Transverse colon (tissue), 4 donors: ENCODE measurements at regions of chr1 and their contacts with region 1.

Region 1: GRCh38 chr1:212488397-212489283 is 55.9 kb downstream of the NENF start:
- DNase-seq: peak; percentile 66
- H3K4me3 ChIP-seq: no peak overlapping the region
- H3K27ac ChIP-seq: peak overlapping the region; percentile 32 to 69 (median 48)
- H3K4me1 ChIP-seq: peaks cover 0 to 13% (median 11%) of the 10 kb centered on the region in 4 donors
- H3K27me3 ChIP-seq: no peaks in the 10 kb centered on the region
- CTCF ChIP-seq: no peak
- EP300 ChIP-seq: no peak
- POLR2A ChIP-seq: no peak

Region 2: DNA sequence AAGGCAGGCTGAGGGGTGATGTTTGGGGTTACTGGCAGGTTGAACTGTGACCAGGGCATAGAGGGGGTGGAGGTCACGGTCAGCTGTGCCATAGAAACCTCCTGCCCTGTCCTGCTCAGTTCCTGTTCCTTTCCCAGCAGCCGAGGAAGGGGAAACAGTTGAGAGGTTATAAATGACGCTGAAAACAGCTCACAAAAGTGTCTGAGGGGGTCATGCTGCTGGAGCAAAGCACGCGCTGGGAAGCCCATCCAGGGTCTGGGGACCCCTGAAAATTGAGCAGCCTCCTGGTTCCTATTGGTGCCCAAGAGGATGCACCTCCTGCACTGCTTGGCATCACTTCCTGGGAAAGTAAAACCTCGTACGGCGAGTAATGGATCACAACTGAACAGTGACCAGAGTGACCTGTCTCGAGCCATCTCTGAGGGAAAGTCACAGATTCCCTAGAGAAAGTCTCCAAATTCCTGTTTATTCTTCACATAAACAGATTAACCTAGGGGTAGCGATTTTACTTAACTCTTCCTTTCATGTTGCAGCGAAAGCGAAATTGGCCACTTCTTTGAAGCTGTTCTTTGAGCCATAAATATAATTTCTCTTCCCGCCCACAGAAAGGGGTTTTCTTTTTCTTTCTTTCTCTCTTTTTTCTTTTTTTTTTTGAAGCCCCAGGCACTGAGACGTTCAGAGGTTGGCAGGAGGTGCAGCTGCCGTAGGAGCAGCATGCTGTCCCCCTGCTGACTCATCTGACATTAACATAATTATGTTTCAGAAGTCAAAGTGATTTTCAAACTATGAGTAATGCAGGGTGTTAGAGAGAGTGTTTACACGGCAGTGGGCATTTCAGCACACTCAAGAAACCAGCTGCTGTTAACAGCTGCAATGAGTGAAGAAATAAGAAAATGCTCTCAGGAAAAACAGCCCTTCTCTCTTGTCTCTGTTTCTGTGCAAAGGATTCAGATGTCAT is 78.2 kb after region 1 on chr1:
- in situ Hi-C with region 1: loop called in 1 of 4 experiments (anchors 10 kb)
- intact Hi-C with region 1: no loop called
- DNase-seq: peak; percentile 45
- H3K4me3 ChIP-seq: peak overlapping the region; percentile 15 to 58 (median 44)
- H3K27ac ChIP-seq: peak overlapping the region; percentile 66 to 80 (median 80)
- H3K4me1 ChIP-seq: peaks cover 5 to 9% (median 9%) of the 10 kb centered on the region in 4 donors
- H3K27me3 ChIP-seq: no peaks in the 10 kb centered on the region
- CTCF ChIP-seq: peak in 3 of 5 experiments; percentile 9 to 31 (median 29)
- EP300 ChIP-seq: no peak
- POLR2A ChIP-seq: peak; percentile 59

Region 3: GRCh38 chr1:212990276-212990675 is 501.6 kb after region 1 on chr1:
- in situ Hi-C with region 1: loop called in 1 of 4 experiments (anchors 10 kb)
- intact Hi-C with region 1: no loop called
- DNase-seq: no peak
- H3K4me3 ChIP-seq: no peak overlapping the region
- H3K27ac ChIP-seq: no peak overlapping the region
- H3K4me1 ChIP-seq: peaks cover 0 to 3% (median 0%) of the 10 kb centered on the region in 4 donors
- H3K27me3 ChIP-seq: no peaks in the 10 kb centered on the region
- CTCF ChIP-seq: no peak
- EP300 ChIP-seq: no peak
- POLR2A ChIP-seq: no peak